ENCODE measurements at regions of chr15 and their contacts with region 1.

Region 1: GRCh38 chr15:29103824-29104565 is 165.6 kb downstream of the NSMCE3 start:
- DNase-seq: no peak
- ATAC-seq: peak; percentile 94
- H3K4me3 ChIP-seq: no peak overlapping the region
- H3K27ac ChIP-seq: no peak overlapping the region
- H3K4me1 ChIP-seq: no peaks in the 10 kb centered on the region
- H3K27me3 ChIP-seq: no peaks in the 10 kb centered on the region
- CTCF ChIP-seq: peak; percentile 62 to 83 (median 68); a peak in 5 of 6 replicates
- EP300 ChIP-seq: no peak
- POLR2A ChIP-seq: no peak
- RAD21 ChIP-seq: peak; percentile 59

Region 2: GRCh38 chr15:29081781-29082180 is 22.2 kb before region 1 on chr15:
- CTCF ChIA-PET with region 1: interaction called, 11 read pairs
- POLR2A ChIA-PET with region 1: no interaction called
- RAD21 ChIA-PET with region 1: no interaction called
- SMC1A ChIA-PET with region 1: interaction called, 3 read pairs
- in situ Hi-C with region 1: no loop called
- intact Hi-C with region 1: no loop called
- DNase-seq: no peak
- ATAC-seq: no peak
- H3K4me3 ChIP-seq: no peak overlapping the region
- H3K27ac ChIP-seq: no peak overlapping the region
- H3K4me1 ChIP-seq: no peaks in the 10 kb centered on the region
- H3K27me3 ChIP-seq: no peaks in the 10 kb centered on the region; a peak in 1 of 4 replicates
- CTCF ChIP-seq: no peak
- EP300 ChIP-seq: no peak
- POLR2A ChIP-seq: no peak
- RAD21 ChIP-seq: no peak

Region 3: DNA sequence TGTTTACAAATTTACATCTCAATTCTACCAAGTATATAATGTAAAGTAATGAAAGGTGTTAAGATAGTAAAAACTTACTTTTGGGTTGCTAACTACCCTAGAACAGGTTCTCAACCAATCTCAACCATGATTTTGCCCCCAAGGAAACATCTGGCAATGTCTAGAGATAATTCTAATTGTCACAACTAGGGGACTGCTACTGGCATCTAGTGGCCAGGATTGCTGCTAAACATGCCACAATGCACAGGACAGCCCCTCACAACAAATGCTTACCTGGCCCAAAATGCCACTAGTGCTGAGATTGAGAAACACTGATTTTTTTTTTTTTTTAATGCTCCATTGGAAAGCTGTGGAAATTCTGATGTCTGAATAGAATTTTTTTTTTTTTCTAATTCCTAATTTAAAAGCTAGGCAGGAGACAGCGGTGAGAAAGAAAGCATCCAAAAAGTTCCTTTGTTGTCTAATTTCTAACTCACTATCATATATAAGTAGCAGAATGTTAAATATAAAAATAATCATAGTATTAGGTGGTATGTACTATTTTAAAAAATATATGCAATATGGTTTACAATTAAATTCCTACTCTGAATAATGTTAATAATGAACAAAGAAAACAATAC is 636.8 kb after region 1 on chr15:
- CTCF ChIA-PET with region 1: no interaction called
- POLR2A ChIA-PET with region 1: no interaction called
- RAD21 ChIA-PET with region 1: interaction called, 4 read pairs
- SMC1A ChIA-PET with region 1: no interaction called
- in situ Hi-C with region 1: no loop called
- intact Hi-C with region 1: loop called (anchors 2 kb)
- DNase-seq: no peak
- ATAC-seq: peak; percentile 48; the same call in 1 of the 3 replicates
- H3K4me3 ChIP-seq: no peak overlapping the region
- H3K27ac ChIP-seq: no peak overlapping the region
- H3K4me1 ChIP-seq: no peaks in the 10 kb centered on the region
- H3K27me3 ChIP-seq: no peaks in the 10 kb centered on the region
- CTCF ChIP-seq: peak; percentile 36 to 50 (median 45); a peak in 5 of 6 replicates
- EP300 ChIP-seq: no peak
- POLR2A ChIP-seq: no peak
- RAD21 ChIP-seq: peak; percentile 51

Region 4: DNA sequence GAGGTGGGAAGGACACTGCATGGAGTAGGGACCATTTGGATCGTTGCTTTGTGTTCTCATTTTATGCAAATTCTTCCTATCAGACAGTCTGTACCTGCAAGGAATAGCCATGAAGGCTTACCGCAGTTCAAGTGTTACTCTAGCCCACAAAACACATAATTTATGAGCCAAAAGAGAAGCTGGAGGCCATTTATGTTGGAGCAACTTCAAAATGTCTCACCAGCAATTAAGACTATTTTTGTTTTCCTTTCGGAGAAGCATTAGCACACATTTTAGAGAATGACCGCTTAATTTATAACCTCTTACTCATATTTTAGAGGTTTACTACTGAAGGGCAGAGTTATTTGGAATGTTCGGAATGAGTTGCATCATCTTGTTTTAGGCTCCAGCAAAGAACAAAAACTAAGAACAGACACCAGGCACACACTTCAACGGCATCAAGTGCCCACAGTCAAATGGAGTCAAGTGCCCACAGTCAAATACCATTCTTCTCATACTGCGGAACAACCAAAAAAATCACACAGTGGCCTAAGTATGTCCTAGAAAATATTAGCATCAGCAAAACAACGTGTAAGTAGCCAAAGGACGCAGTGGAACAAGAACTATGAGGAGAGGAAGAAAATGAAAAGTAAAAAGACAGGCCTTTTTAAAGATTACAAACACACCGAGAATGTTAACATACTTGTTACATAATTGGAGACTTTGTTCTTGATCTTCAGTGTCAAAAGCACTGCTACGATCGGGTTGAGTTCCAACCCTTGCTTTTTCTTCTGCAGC is 961.2 kb after region 1 on chr15:
- CTCF ChIA-PET with region 1: no interaction called
- POLR2A ChIA-PET with region 1: no interaction called
- RAD21 ChIA-PET with region 1: no interaction called
- SMC1A ChIA-PET with region 1: no interaction called
- in situ Hi-C with region 1: loop called (anchors 25 kb)
- intact Hi-C with region 1: no loop called
- DNase-seq: no peak
- ATAC-seq: no peak
- H3K4me3 ChIP-seq: no peak overlapping the region
- H3K27ac ChIP-seq: no peak overlapping the region
- H3K4me1 ChIP-seq: no peaks in the 10 kb centered on the region
- H3K27me3 ChIP-seq: no peaks in the 10 kb centered on the region
- CTCF ChIP-seq: no peak
- EP300 ChIP-seq: no peak
- POLR2A ChIP-seq: no peak
- RAD21 ChIP-seq: no peak